ENCODE measurements at regions of chr11 and their contacts with region 1.

Region 1: DNA sequence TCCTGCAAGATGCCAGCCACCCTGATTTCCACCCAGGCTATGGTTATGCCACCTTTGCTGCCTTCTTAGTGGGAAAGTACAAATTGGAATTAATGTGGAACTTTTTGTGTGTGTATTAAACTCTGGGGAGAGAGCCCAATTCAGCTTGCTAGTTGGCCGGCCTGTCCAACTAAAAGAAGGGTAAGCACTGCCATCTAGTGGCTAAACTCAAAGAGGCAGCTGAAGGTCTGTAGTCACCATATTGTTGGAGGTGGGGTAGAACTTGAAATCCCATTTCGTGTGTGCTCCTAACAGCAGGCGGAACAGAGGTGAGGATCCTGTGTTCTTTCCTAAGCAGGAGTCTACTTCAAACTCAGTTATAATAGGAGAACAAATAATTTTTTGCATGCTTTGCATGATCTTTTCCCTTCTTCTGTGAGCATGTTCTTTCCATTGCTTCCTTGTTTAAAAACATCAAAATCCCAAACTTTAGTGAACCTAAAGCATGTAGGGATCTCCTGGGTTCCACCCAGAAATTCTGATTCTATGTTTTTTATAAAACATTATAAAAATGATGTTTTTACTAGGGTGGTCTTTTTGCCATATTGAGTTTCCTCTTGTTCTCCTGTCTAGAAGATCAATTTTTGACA is 138.8 kb upstream of the SORL1-AS1 start:
- DNase-seq: peak; percentile 40 to 65
- ATAC-seq: peak; percentile 29

Region 2: GRCh38 chr11:121249039-121249663 is 342.4 kb before region 1 on chr11:
- intact Hi-C with region 1: loop called in 1 of 2 experiments (anchors 5 kb)
- DNase-seq: no peak
- ATAC-seq: peak; percentile 58

Region 3: DNA sequence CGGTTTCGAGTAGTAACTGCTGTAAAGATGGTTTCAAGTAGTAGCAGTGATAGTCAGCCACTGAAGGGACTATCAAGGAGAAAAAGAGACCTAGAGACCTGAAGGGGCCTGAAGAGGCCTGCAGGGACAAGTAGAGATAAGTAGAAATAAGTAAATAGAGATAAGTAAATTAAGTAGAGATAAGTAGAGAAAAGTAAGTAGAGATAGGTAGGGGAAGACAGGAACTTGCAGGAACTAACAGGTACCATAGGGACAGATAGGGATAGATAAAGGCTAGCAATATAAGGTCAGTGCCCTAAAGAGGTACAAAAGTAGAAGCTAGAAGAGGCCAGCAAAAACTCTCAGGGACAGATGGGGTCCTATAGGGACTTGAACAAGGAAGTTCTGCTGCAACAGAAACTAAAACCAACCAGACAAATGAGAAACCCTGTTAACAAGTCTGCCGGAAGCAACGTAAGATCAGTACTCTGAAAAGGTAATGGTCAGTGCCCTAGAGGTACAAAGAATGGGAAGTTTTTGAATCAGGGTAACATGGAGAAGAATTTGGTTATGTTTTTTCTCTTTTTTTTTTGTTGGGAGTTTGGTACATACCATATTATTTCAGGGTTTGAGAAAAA is 308.5 kb before region 1 on chr11:
- intact Hi-C with region 1: no loop called
- DNase-seq: no peak
- ATAC-seq: no peak

Region 4: GRCh38 chr11:121318848-121319834 is 272.4 kb before region 1 on chr11:
- intact Hi-C with region 1: loop called (anchors 2 to 10 kb)
- DNase-seq: no peak
- ATAC-seq: peak; percentile 82